Activated CD4-positive, alpha-beta memory T cell treated with anti-CD3 and anti-CD28 coated beads, Interleukin-2, amount 10 ng/mL, durations not matched to agents 7 days and 5 days (primary cell): ENCODE measurements at regions of chrX and their contacts with region 1.

Region 1: GRCh38 chrX:21985332-21985777 is 44.8 kb downstream of the SMS start:
- DNase-seq: peak; percentile 72
- H3K4me3 Mint-ChIP-seq: no peak overlapping the region
- H3K27ac Mint-ChIP-seq: no peak overlapping the region
- H3K4me1 Mint-ChIP-seq: peaks cover 11% of the 10 kb centered on the region
- H3K27me3 Mint-ChIP-seq: no peaks in the 10 kb centered on the region

Region 2: DNA sequence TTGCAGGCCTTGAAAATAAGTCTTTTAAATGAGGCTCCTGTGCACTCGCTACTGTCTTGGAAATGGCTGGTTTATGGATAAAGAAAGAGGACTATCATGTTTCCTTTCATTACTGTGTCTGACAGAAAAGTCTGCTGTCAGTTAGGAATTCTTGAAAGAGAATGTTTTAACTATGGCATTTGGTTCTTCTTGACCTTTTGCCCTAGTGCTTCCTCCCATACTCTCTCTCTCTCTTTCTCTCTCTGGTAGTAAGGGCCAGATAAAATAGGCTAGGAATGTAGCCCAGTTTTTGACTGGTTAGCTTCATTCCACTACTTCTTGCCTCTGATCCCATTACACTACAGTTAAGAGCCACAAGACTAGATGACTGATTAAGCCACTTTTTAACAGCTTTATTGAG is 99.8 kb before region 1 on chrX:
- CTCF ChIA-PET with region 1: no interaction called
- POLR2A ChIA-PET with region 1: no interaction called
- DNase-seq: no peak
- H3K4me3 Mint-ChIP-seq: no peak overlapping the region
- H3K27ac Mint-ChIP-seq: no peak overlapping the region
- H3K4me1 Mint-ChIP-seq: no peaks in the 10 kb centered on the region
- H3K27me3 Mint-ChIP-seq: no peaks in the 10 kb centered on the region

Region 3: DNA sequence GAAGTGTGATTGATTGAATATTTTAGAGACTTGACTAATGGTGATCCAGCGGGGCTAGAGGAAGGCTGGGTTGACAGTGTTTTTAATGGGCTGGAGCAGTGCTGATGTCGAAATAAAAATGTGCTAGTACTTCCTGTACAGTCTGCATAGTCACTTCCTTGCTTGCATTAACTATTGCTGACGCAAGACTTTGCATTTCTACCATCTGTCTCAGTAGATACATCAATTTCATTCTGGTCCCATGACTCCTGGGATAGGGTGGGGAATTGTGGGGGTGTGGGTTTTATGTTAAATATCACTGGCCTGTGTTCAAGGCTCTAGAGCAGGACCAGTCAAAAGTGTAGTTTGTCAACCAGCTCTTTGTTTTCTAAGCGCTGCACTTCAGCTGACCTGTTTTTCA is 11.5 kb after region 1 on chrX:
- CTCF ChIA-PET with region 1: interaction called, 13 read pairs
- POLR2A ChIA-PET with region 1: no interaction called
- DNase-seq: no peak
- H3K4me3 Mint-ChIP-seq: no peak overlapping the region
- H3K27ac Mint-ChIP-seq: peak overlapping the region; percentile 77
- H3K4me1 Mint-ChIP-seq: peaks cover 23% of the 10 kb centered on the region
- H3K27me3 Mint-ChIP-seq: no peaks in the 10 kb centered on the region

Region 4: DNA sequence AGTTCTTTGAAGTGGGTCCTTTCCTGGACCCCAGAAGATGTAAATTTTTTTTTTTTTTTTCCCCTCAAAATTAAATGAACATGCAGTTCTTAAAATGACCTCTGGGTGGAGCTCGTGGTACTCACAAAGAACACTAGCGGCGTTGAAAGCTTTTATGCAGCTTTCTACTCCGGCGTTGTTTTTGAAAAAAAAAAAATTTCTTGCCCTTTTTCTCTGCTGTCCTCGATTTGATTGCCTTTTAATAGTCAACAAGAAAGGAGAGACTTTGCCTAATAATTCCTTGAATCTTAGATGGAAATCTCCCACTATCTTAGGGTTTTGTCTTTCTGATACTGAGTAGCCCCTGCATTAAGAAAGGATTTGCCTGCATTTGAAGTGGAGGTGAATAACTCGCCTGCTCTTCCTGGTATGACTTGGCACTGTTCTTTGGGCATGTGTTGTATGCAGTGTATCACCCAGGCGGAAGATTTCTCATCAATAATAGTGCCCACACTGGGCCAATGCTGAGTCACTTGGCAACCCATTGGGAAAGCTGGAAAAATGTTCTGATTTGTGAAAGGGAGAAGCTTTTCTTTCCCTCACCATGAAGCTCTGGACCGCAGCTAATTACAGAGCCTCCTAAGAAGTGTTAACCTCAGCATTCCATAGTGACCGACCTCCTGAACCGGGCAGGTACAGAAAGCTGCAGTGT is 150.8 kb after region 1 on chrX:
- CTCF ChIA-PET with region 1: interaction called, 29 read pairs
- POLR2A ChIA-PET with region 1: no interaction called
- DNase-seq: no peak
- H3K4me3 Mint-ChIP-seq: no peak overlapping the region
- H3K27ac Mint-ChIP-seq: no peak overlapping the region
- H3K4me1 Mint-ChIP-seq: peaks cover 12% of the 10 kb centered on the region
- H3K27me3 Mint-ChIP-seq: no peaks in the 10 kb centered on the region